Dendritic cell treated with granulocyte-macrophage colony-stimulating factor and Interleukin-4, amounts not matched to agents 40 ng/mL and 50 ng/mL, for 4 days (primary cell): ENCODE measurements at regions of chr11 and their contacts with region 1.

Region 1: DNA sequence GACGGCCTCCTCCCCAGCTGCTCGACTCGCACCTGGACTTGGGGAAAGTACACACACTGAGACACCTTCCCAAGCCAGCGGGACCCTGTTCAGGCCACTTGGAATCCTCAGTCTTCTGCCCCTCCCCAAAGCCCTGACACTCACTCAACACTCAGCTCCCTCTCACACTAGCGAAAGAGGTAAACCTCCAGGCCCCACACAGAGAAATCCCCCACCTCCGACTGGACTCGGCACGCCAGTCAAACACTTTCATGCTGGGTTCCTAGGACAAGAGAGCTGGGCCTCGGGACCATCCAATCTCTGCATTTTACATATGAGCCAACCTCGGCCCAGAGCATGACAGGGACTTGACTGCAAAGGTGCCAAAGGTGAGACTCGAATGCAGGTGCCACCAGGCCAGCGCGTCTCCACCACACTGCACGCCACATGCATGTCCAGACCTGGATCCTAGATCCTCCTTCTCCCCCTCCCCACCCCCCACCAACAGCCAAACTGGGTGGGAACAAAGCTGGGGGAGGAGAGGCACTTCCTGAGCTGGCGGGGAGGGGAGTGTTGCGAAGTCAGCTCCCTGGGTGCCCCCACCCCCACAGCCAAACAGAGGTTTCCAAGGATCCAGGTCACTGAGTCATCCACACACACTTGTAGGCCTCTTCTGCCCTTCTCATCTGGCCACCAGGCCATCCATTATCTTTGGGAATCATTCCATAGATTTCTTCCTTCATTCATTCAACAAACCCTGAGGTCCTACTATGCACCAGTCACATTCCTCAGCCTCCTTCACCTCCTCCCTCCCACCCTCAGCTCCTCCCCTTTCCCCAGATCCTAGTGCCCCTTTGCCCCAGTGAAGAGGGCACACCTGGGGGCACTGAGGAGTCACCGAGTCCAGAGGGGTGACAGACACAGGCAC is 10.7 kb upstream of the CD5 start:
- H3K4me3 Mint-ChIP-seq: no peak overlapping the region
- H3K27ac Mint-ChIP-seq: peak overlapping the region; percentile 87
- H3K4me1 Mint-ChIP-seq: peaks cover 57% of the 10 kb centered on the region
- H3K27me3 Mint-ChIP-seq: peaks cover 3% of the 10 kb centered on the region

Region 2: DNA sequence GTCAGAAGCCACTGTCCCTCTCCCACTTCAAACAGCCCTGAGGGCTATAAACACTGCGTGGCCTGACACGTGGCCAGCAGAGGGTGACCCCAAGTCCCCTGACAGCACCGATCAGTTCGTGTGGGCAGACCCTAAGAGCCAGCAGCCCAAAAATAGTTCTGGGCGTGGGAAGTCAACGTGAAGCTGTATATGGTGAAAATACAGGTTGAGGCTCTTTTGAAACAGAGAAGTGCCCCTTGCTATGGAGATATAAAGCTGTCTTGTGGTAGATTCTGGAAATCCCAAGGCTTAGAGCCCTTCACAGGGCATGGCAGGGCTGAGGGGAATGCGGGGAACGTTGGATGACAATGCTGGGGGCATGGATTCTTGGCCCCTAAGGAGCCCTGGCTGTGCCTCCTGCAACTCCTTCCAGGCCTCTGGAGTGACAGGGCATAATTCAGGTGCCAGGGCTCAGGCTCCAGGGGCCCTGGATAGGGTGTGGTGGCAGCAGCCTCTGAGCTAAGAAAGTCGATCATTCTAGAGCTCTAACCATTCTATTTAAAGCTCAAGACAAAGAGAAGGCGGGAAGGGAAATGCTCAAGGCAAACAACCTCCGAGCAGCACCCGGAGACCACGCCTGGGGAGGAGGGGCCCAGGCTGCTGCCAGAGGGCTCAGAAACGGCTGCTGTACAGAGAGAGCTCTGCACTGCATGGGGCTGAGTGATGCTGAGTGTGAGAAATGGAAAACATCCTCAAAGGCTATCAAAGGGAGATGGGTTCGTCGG is 49.7 kb before region 1 on chr11:
- intact Hi-C with region 1: loop called (anchors 10 kb)
- H3K4me3 Mint-ChIP-seq: no peak overlapping the region
- H3K27ac Mint-ChIP-seq: no peak overlapping the region
- H3K4me1 Mint-ChIP-seq: peaks cover 19% of the 10 kb centered on the region
- H3K27me3 Mint-ChIP-seq: peaks cover 9% of the 10 kb centered on the region

Region 3: GRCh38 chr11:61075891-61076290 is 15.7 kb before region 1 on chr11:
- intact Hi-C with region 1: loop called (anchors 2 kb)
- H3K4me3 Mint-ChIP-seq: no peak overlapping the region
- H3K27ac Mint-ChIP-seq: no peak overlapping the region
- H3K4me1 Mint-ChIP-seq: peaks cover 27% of the 10 kb centered on the region
- H3K27me3 Mint-ChIP-seq: peaks cover 2% of the 10 kb centered on the region

Region 4: DNA sequence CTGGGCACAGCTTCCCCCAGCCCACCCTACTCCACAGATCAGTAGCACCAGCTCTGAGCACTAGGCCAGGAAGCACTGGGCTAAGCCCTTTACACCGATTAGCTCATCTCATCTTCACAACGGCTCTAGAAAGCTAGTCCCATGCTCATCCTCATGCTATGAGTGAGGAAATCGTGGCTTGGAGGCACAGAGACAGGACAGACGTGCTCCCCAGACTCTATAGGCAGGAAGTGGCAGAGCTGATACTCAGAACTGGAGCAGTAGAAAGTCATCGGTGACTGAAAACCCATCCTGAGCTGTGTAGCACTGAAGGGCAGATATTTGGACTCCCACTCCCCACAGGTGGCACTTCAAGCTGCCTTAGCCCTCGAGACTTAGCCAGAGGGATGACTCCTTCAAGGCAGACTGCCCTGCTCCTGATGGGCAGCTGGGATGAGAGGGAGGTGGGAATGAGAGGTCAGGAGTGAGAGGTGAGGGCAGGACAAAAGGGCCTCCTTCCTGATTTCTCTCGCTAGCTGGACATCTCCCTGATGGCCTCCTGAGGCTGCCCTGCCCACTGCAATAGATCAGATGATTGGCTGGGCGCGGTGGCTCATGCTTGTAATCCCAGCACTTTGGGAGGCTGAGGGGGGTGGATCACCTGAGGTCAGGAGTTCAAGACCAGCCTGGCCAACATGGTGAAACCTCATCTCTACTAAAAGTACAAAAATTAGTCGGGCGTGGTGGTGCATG is 20.3 kb after region 1 on chr11:
- intact Hi-C with region 1: no loop called
- H3K4me3 Mint-ChIP-seq: no peak overlapping the region
- H3K27ac Mint-ChIP-seq: no peak overlapping the region
- H3K4me1 Mint-ChIP-seq: peaks cover 45% of the 10 kb centered on the region
- H3K27me3 Mint-ChIP-seq: peaks cover 5% of the 10 kb centered on the region